MCF 10A (cell line): ENCODE measurements at regions of chrX and their contacts with region 1.

Region 1: GRCh38 chrX:140733769-140734342 is 24.3 kb downstream of the LINC00632 start:
- DNase-seq: peak; percentile 75
- H3K4me3 Mint-ChIP-seq: no peak overlapping the region
- H3K27ac Mint-ChIP-seq: no peak overlapping the region
- H3K4me1 Mint-ChIP-seq: no peaks in the 10 kb centered on the region
- H3K27me3 Mint-ChIP-seq: no peaks in the 10 kb centered on the region
- CTCF ChIP-seq: peak; percentile 82

Region 2: DNA sequence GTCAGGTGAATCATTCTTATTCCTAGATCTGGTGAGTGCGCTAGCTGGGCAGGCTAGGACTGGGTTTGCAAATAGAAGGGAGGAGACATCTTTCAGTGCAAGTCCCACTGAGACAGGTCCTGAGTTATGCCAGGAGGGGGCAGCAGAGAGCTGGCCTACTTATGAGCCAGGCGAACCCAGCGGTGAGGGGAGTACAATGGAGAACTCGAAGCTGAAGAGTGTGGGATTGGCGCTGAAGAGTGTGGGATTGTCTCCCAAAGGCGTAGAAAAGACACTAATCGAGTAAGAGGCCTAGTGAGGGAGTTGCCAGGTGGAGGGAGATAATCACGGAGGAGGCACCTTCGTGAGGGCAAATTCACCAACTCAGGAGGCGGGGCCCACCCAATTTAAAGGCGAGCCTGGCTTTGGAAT is 676.9 kb before region 1 on chrX:
- CTCF ChIA-PET with region 1: interaction called, 3 read pairs
- POLR2A ChIA-PET with region 1: no interaction called
- intact Hi-C with region 1: loop called (anchors 2 kb)
- DNase-seq: peak; percentile 86
- H3K4me3 Mint-ChIP-seq: no peak overlapping the region
- H3K27ac Mint-ChIP-seq: no peak overlapping the region
- H3K4me1 Mint-ChIP-seq: peaks cover 6% of the 10 kb centered on the region
- H3K27me3 Mint-ChIP-seq: peaks cover 15% of the 10 kb centered on the region
- CTCF ChIP-seq: peak; percentile 83

Region 3: DNA sequence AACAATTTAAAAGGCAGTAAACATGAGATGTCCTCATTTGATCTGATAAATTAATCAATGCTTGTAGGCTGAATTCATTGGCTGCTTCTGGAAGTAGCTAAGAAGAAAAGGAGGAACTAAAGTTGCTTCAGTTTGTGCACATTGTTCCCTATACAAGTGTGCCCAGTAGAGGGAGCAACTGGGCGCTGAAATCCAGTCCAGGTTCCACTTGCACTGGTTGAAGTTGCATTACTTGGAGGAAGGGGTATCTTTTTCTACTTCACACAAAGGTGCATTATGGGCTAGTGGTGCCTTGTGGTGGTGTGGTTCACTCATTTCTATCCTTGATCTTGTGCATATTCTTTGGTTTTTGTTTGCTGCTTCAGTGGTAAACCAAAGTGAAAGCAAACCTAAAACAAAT is 161.1 kb before region 1 on chrX:
- CTCF ChIA-PET with region 1: interaction called, 3 read pairs
- POLR2A ChIA-PET with region 1: no interaction called
- intact Hi-C with region 1: loop called (anchors 1 kb)
- DNase-seq: peak; percentile 68
- H3K4me3 Mint-ChIP-seq: no peak overlapping the region
- H3K27ac Mint-ChIP-seq: no peak overlapping the region
- H3K4me1 Mint-ChIP-seq: peaks cover 6% of the 10 kb centered on the region
- H3K27me3 Mint-ChIP-seq: peaks cover 29% of the 10 kb centered on the region
- CTCF ChIP-seq: peak; percentile 61

Region 4: GRCh38 chrX:140701480-140701879 is 32.4 kb before region 1 on chrX:
- CTCF ChIA-PET with region 1: interaction called, 62 read pairs
- POLR2A ChIA-PET with region 1: no interaction called
- intact Hi-C with region 1: loop called (anchors 1 kb)
- DNase-seq: peak; percentile 68
- H3K4me3 Mint-ChIP-seq: no peak overlapping the region
- H3K27ac Mint-ChIP-seq: no peak overlapping the region
- H3K4me1 Mint-ChIP-seq: no peaks in the 10 kb centered on the region
- H3K27me3 Mint-ChIP-seq: no peaks in the 10 kb centered on the region
- CTCF ChIP-seq: peak; percentile 48

Region 5: GRCh38 chrX:141402897-141403610 is 669.2 kb after region 1 on chrX:
- CTCF ChIA-PET with region 1: no interaction called
- POLR2A ChIA-PET with region 1: no interaction called
- intact Hi-C with region 1: no loop called
- DNase-seq: no peak
- H3K4me3 Mint-ChIP-seq: no peak overlapping the region
- H3K27ac Mint-ChIP-seq: no peak overlapping the region
- H3K4me1 Mint-ChIP-seq: peaks cover 17% of the 10 kb centered on the region
- H3K27me3 Mint-ChIP-seq: no peaks in the 10 kb centered on the region
- CTCF ChIP-seq: no peak